ENCODE measurements at regions of chr18 and their contacts with region 1.

Region 1: GRCh38 chr18:13159579-13159978 is 59.0 kb upstream of the LDLRAD4 start:
- DNase-seq: no peak
- ATAC-seq: peak; percentile 30
- H3K4me3 Mint-ChIP-seq: no peak overlapping the region
- H3K27ac Mint-ChIP-seq: no peak overlapping the region
- H3K4me1 Mint-ChIP-seq: peaks cover 3% of the 10 kb centered on the region
- H3K27me3 Mint-ChIP-seq: peaks cover 21% of the 10 kb centered on the region

Region 2: GRCh38 chr18:13139885-13140450 is 19.6 kb before region 1 on chr18:
- CTCF ChIA-PET with region 1: interaction called, 12 read pairs
- DNase-seq: no peak
- ATAC-seq: no peak
- H3K4me3 Mint-ChIP-seq: no peak overlapping the region
- H3K27ac Mint-ChIP-seq: no peak overlapping the region
- H3K4me1 Mint-ChIP-seq: peaks cover 27% of the 10 kb centered on the region
- H3K27me3 Mint-ChIP-seq: peaks cover 17% of the 10 kb centered on the region

Region 3: DNA sequence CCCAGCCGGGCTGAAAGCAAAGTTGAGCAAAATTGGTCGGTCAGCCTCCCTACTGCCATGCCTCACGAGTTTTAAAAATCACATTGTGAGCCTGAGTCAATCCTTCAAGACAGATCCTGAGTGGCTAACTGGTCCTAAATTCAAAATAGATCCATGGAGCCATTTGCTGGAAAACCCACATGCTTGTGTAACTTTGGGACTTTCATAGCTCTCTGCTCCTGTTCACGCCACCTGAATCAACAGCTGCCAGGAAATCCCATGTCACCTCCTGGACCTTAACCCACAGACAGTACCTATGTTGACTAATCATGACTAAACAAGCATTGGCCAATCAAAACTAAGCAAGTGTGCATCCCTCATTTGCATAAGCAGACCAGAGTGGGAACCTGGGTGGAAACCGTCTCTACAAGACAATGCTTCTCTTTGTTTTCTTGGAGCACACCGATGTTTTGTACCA is 16.2 kb after region 1 on chr18:
- CTCF ChIA-PET with region 1: interaction called, 15 read pairs
- DNase-seq: no peak
- ATAC-seq: no peak
- H3K4me3 Mint-ChIP-seq: no peak overlapping the region
- H3K27ac Mint-ChIP-seq: no peak overlapping the region
- H3K4me1 Mint-ChIP-seq: peaks cover 33% of the 10 kb centered on the region
- H3K27me3 Mint-ChIP-seq: peaks cover 15% of the 10 kb centered on the region